Esophagus muscularis mucosa (tissue), 4 donors: ENCODE measurements at regions of chr21 and their contacts with region 1.

Region 1: GRCh38 chr21:46097336-46098293 is at the start of gene COL6A2:
- DNase-seq: peak; percentile 92
- H3K4me3 ChIP-seq: peak within 1 kb of the TSS; percentile 81 to 97 (median 94)
- H3K27ac ChIP-seq: peak within 1 kb of the TSS; percentile 99 to 100 (median 99)
- H3K4me1 ChIP-seq: peaks cover 24 to 73% (median 71%) of the 10 kb centered on the region in 4 donors
- H3K27me3 ChIP-seq: peaks cover 0 to 8% (median 0%) of the 10 kb centered on the region in 4 donors
- CTCF ChIP-seq: peak; percentile 54 to 70 (median 60)
- EP300 ChIP-seq: no peak
- POLR2A ChIP-seq: peak; percentile 83
- total RNA-seq, gene COL6A2: 942 to 1,525 (median 1,202) TPM

Region 2: DNA sequence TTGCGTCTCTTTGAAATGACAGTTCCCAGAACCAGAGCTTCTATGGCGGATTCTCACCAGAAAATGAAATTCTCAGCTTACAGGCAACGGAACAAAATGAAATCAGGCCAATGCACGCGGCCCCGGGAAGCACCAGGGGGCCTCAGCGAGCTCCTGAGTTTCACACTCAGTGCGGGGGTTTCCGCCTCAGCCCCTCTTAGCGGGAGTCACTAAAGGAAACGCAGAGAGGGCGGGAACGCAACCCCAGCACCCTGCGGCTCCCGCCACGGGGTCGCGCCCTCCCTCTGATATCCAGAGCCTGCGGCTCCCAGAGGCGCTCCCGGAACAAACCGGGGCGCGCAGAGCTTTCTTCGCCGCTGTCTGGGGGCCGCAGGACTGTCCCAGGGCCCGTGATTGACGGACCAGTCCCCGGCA is 123.9 kb before region 1 on chr21:
- intact Hi-C with region 1: loop called (anchors 1 kb)
- DNase-seq: no peak
- H3K4me3 ChIP-seq: peak overlapping the region; percentile 59 to 62 (median 61)
- H3K27ac ChIP-seq: peak overlapping the region; percentile 96 to 99 (median 98)
- H3K4me1 ChIP-seq: peaks cover 64 to 86% (median 80%) of the 10 kb centered on the region in 4 donors
- H3K27me3 ChIP-seq: no peaks in the 10 kb centered on the region
- CTCF ChIP-seq: peak; percentile 69 to 82 (median 78)
- EP300 ChIP-seq: no peak
- POLR2A ChIP-seq: no peak

Region 3: DNA sequence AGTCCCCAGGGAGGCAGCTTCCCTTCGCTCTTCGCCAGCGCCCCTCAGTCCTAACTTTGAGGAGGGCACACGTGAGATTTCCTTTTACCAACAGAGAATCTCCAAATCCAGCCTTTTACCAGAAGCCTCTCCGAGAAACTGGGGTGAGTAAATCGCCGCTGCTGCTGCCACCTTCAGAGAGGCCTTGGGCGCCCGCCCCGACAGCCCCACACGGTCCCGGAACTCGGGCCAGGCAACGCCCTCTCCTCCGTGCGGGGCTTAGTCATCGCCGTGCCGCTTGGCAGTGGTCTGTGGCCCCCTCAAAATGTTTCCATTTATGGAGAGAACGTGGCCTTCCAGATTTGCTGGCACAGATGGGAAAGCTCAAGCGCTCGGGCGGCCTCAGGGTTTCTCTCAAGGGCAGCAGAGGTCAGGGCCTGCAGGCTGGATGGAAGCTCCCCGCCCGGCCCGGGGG is 41.1 kb before region 1 on chr21:
- intact Hi-C with region 1: loop called (anchors 2 kb)
- DNase-seq: peak; percentile 95
- H3K4me3 ChIP-seq: peak overlapping the region in 3 of 4 donors; percentile 33 to 43 (median 37)
- H3K27ac ChIP-seq: peak overlapping the region; percentile 94 to 99 (median 96)
- H3K4me1 ChIP-seq: peaks cover 39 to 67% (median 56%) of the 10 kb centered on the region in 4 donors
- H3K27me3 ChIP-seq: peaks cover 0 to 5% (median 0%) of the 10 kb centered on the region in 4 donors
- CTCF ChIP-seq: no peak
- EP300 ChIP-seq: peak; percentile 69
- POLR2A ChIP-seq: peak; percentile 42

Region 4: DNA sequence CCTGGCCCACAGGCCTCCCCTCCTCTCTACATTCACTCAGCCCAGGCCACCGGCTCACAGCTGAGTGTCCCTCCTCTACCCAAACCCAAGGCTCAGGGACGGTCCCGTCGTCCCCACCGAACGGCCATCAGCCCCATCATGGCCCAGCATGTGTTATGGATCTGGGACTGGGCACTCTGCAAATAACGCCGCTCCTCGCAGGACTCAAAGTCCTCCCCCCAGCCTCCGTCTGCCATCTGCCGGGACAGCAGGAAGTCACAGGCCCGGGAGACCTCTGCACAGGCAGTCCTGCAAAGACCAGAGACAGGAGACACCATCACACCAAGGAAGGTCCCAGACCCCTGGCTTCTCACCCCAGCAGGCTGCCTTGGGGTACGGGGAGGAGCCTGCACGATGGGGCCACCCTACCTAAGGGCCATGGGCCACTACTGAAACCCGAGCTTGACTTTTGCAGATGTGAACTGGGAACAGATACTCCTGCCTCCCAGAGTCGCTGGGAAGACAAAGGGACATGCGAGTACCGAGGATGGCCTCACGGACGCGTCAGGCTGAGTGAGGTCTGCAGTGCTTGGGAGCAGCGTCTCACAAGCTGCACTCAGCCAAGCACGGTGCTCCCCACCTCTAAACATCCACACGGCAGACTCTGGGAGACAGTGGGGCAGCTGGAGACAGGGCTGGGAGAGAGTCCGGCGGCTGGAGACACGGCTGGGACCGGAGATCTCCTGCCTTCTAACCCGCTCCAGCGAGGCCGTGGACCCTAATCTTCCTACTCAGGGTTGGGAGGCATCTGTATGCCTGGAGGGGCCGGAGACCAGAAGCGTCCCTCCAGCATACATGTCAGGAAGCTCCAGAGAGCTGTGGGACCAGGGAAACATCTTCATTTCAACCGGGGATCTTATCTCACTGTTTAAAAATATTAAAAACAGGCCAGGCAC is 97.0 kb after region 1 on chr21:
- intact Hi-C with region 1: no loop called
- DNase-seq: no peak
- H3K4me3 ChIP-seq: no peak overlapping the region
- H3K27ac ChIP-seq: no peak overlapping the region
- H3K4me1 ChIP-seq: peaks cover 14 to 19% (median 15%) of the 10 kb centered on the region in 4 donors
- H3K27me3 ChIP-seq: no peaks in the 10 kb centered on the region
- CTCF ChIP-seq: no peak
- EP300 ChIP-seq: no peak
- POLR2A ChIP-seq: no peak

Region 5: DNA sequence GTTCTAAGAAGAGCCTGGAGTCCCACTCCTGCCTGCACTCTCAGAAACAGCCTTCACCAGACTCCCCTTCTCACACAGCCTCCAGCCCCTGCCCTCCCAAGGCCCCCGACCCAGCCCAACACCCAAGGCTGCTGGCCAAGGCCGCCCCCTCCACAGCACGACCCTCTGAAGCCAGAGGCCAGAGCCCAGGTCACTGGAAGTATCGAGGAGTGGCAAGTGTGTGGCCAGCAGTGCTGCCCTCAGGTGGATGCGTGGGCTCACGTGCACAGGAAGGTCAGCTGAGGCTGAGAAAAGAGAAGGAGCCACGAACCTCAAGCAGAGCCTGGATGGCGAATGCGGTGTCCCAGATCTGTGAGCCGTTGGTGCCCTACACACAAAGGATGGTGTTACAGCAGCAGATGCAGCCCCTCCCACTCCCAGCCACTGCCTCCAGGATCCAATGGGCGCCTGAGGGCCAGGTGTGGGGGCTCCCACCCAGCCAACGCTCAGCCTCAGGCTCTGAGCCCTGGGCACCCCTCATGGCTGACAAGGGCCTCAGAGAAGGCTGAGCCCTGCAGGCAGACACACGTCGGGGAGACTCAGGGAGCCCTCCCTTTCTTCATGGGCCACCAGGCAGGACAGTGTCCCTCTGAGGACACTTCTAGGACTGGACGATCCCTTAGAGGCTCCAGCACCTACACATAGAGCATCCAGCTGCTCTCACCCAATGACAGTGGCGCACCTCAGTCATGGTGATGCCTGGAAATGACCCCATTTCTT is 112.9 kb after region 1 on chr21:
- intact Hi-C with region 1: no loop called
- DNase-seq: no peak
- H3K4me3 ChIP-seq: no peak overlapping the region
- H3K27ac ChIP-seq: no peak overlapping the region
- H3K4me1 ChIP-seq: no peaks in the 10 kb centered on the region
- H3K27me3 ChIP-seq: no peaks in the 10 kb centered on the region
- CTCF ChIP-seq: peak in 1 of 3 experiments; percentile 7
- EP300 ChIP-seq: no peak
- POLR2A ChIP-seq: no peak

Region 6: DNA sequence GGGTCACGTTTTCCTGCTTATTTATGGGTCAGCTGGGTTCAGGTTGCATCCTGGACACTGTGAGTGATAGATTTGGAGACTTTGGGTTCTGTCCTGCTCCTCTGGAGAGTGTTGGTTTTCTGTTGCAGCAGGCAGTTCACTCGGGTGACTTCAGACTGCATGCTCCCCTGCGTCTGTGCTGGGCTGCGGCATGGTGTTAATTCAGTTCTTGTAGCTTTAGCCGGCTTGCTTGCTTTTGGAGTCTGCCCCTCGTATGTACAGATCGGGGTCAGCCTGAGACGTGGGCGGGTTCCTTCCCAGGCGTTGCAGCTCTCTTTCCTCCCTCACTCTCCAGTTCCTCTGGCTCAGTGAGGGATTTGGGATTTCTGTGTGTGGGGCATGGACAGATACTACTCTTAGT is 264.3 kb after region 1 on chr21:
- intact Hi-C with region 1: no loop called
- DNase-seq: no peak
- H3K4me3 ChIP-seq: no peak overlapping the region
- H3K27ac ChIP-seq: no peak overlapping the region
- H3K4me1 ChIP-seq: no peaks in the 10 kb centered on the region
- H3K27me3 ChIP-seq: no peaks in the 10 kb centered on the region
- CTCF ChIP-seq: no peak
- EP300 ChIP-seq: no peak
- POLR2A ChIP-seq: no peak